PC-9 (cell line): ENCODE measurements at regions of chr11 and their contacts with region 1.

Region 1: GRCh38 chr11:66126808-66127555 is 56.9 kb downstream of the PACS1 start:
- DNase-seq: peak in 1 of 2 experiments; percentile 51
- H3K4me3 ChIP-seq: no peak overlapping the region
- H3K27ac ChIP-seq: no peak overlapping the region
- H3K4me1 ChIP-seq: peaks cover 31% of the 10 kb centered on the region
- H3K27me3 ChIP-seq: no peaks in the 10 kb centered on the region
- CTCF ChIP-seq: no peak

Region 2: DNA sequence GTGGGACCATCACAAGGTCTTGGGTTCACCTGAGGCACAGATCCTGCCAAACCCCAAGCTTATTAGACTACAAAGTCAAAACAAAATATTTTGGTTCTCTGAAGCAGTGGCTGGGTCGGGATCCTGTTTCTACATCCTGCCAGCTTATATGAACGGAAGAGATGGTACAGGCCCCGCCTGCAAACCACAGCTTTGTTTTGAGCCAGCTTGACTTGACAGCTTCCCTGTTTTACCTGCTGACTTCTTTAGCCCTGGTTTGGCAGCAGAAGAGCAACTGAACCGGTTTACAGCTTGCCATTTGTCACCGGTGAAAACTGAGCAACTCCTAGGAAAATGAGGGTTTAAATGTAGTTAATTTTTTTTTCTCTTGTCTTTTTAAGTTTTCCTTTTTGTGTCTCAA is 45.5 kb before region 1 on chr11:
- CTCF ChIA-PET with region 1: interaction called, 4 read pairs
- POLR2A ChIA-PET with region 1: interaction called, 4 read pairs
- intact Hi-C with region 1: loop called (anchors 2 kb)
- DNase-seq: peak; percentile 79 to 94
- H3K4me3 ChIP-seq: peak overlapping the region; percentile 42; the same call in 1 of the 2 replicates
- H3K27ac ChIP-seq: peak overlapping the region; percentile 57
- H3K4me1 ChIP-seq: peaks cover 42% of the 10 kb centered on the region
- H3K27me3 ChIP-seq: no peaks in the 10 kb centered on the region
- CTCF ChIP-seq: no peak